Dendritic cell treated with granulocyte-macrophage colony-stimulating factor and Interleukin-4, amounts not matched to agents 40 ng/mL and 50 ng/mL, for 4 days (primary cell): ENCODE measurements at regions of chr2 and their contacts with region 1.

Region 1: GRCh38 chr2:112726497-112727190 is 5.8 kb downstream of the NT5DC4 start:
- H3K4me3 Mint-ChIP-seq: no peak overlapping the region
- H3K27ac Mint-ChIP-seq: no peak overlapping the region
- H3K4me1 Mint-ChIP-seq: peaks cover 71% of the 10 kb centered on the region
- H3K27me3 Mint-ChIP-seq: no peaks in the 10 kb centered on the region

Region 2: GRCh38 chr2:112584134-112584890 is 142.3 kb before region 1 on chr2 and contains the start of gene CHCHD5:
- intact Hi-C with region 1: loop called (anchors 5 kb)
- H3K4me3 Mint-ChIP-seq: peak within 1 kb of the TSS; percentile 92
- H3K27ac Mint-ChIP-seq: peak within 1 kb of the TSS; percentile 95
- H3K4me1 Mint-ChIP-seq: peaks cover 54% of the 10 kb centered on the region
- H3K27me3 Mint-ChIP-seq: no peaks in the 10 kb centered on the region

Region 3: DNA sequence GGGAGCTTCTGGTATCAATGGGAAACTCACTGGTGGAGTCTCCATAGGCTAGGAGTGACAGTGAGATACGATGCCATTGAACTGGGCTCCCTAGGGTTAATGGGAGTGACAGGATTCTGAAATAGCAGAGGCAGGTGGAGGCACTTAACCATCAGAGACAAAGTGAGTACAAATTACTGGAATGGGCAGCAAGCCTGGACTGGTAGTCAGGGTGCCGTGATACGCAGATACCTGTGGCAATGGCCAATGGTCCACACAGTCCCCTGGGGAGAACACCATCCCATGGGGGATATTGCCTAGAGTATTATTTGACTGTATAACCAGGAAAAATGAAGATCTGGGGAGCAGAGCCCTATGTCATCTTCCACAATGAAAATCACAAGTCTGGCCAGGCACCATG is 124.9 kb before region 1 on chr2:
- intact Hi-C with region 1: loop called (anchors 1 kb)
- H3K4me3 Mint-ChIP-seq: no peak overlapping the region
- H3K27ac Mint-ChIP-seq: peak overlapping the region; percentile 35
- H3K4me1 Mint-ChIP-seq: peaks cover 13% of the 10 kb centered on the region
- H3K27me3 Mint-ChIP-seq: no peaks in the 10 kb centered on the region

Region 4: DNA sequence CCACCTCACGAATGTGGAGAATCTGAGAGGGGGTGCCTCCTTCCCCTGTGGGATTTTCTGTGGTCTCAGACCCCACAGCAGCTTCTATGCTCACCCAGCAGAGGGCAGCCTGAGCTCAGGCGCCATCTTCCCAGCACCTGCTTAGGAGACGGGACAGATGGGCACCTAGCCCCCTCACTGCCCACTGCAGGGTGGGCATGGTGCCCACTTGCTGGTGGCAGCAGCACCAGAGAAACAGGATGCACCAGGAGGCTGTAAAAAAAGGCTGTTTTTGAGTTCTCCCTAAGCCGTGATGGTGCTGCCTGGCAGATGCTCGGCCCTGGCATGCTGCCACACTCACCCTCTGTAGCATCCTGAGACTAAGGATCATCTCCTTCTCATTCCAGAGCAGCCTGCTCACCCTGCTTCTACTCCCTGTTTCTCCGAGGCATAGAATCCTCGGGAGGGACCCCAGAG is 100.0 kb before region 1 on chr2:
- intact Hi-C with region 1: loop called (anchors 1 kb)
- H3K4me3 Mint-ChIP-seq: no peak overlapping the region
- H3K27ac Mint-ChIP-seq: peak overlapping the region; percentile 75
- H3K4me1 Mint-ChIP-seq: peaks cover 72% of the 10 kb centered on the region
- H3K27me3 Mint-ChIP-seq: no peaks in the 10 kb centered on the region

Region 5: GRCh38 chr2:112645310-112646101 is 81.1 kb before region 1 on chr2 and contains the start of gene SLC20A1:
- intact Hi-C with region 1: loop called (anchors 1 kb)
- H3K4me3 Mint-ChIP-seq: peak within 1 kb of the TSS; percentile 82
- H3K27ac Mint-ChIP-seq: peak within 1 kb of the TSS; percentile 86
- H3K4me1 Mint-ChIP-seq: peaks cover 76% of the 10 kb centered on the region
- H3K27me3 Mint-ChIP-seq: no peaks in the 10 kb centered on the region

Region 6: GRCh38 chr2:112674229-112674628 is 52.4 kb before region 1 on chr2:
- intact Hi-C with region 1: loop called (anchors 5 kb)
- H3K4me3 Mint-ChIP-seq: peak overlapping the region; percentile 69
- H3K27ac Mint-ChIP-seq: peak overlapping the region; percentile 78
- H3K4me1 Mint-ChIP-seq: peaks cover 18% of the 10 kb centered on the region
- H3K27me3 Mint-ChIP-seq: no peaks in the 10 kb centered on the region

Region 7: GRCh38 chr2:112692496-112692911 is 34.1 kb before region 1 on chr2:
- intact Hi-C with region 1: loop called (anchors 5 kb)
- H3K4me3 Mint-ChIP-seq: peak overlapping the region; percentile 48
- H3K27ac Mint-ChIP-seq: peak overlapping the region; percentile 93
- H3K4me1 Mint-ChIP-seq: peaks cover 64% of the 10 kb centered on the region
- H3K27me3 Mint-ChIP-seq: no peaks in the 10 kb centered on the region

Region 8: GRCh38 chr2:112757265-112757664 is 30.6 kb after region 1 on chr2:
- intact Hi-C with region 1: no loop called
- H3K4me3 Mint-ChIP-seq: no peak overlapping the region
- H3K27ac Mint-ChIP-seq: no peak overlapping the region
- H3K4me1 Mint-ChIP-seq: peaks cover 16% of the 10 kb centered on the region
- H3K27me3 Mint-ChIP-seq: no peaks in the 10 kb centered on the region